Right cardiac atrium (tissue), 5 donors: ENCODE measurements at regions of chr19 and their contacts with region 1.

Region 1: DNA sequence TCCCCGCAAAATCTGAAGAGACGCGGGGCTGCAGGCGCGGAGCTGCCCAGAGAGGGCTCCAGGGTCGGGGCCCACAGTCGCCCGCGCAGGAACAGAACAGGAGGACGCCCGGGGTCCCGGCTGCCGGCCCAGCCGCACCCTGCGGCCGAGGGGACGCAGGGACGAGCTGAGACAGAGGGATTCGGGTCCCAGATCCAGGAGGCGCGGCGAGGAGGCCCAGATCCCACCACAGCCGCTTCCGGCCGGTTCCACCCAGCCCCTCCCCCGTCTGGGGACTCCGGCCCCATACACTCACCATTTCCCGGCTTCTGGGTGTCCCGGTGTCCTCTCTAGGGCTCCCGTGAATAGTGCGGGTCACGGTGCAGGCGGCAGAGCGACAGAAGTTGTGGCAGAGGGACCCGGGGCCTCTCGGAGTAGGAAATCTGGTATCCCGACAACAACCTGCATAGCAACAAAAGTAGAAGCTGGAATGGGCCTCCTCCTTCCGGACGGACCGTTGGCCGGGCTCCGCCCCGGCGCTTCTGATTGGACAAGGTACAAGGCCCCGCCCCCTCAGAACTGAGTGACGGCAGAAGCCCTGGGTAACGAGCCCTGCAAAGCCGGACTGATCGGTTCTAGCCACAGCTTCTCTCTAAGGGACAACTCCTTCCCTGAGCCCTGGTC is at the start of gene ZNF20:
- DNase-seq: peak; percentile 95 to 98 (median 98)
- ATAC-seq: peak; percentile 99 to 100
- H3K4me3 ChIP-seq: peak within 1 kb of the TSS; percentile 98
- H3K27ac ChIP-seq: peak within 1 kb of the TSS; percentile 88
- H3K4me1 ChIP-seq: peaks cover 4% of the 10 kb centered on the region
- H3K27me3 ChIP-seq: no peaks in the 10 kb centered on the region
- total RNA-seq, gene ZNF20: 0.42 to 2.5 (median 2.1) TPM

Region 2: GRCh38 chr19:11798391-11799330 is 341.4 kb before region 1 on chr19 and contains the start of gene ZNF491:
- intact Hi-C with region 1: loop called in 1 of 4 experiments (anchors 5 kb)
- DNase-seq: peak; percentile 94 to 98 (median 97)
- ATAC-seq: peak; percentile 100
- H3K4me3 ChIP-seq: peak within 1 kb of the TSS; percentile 65
- H3K27ac ChIP-seq: peak within 1 kb of the TSS; percentile 86
- H3K4me1 ChIP-seq: peaks cover 4% of the 10 kb centered on the region
- H3K27me3 ChIP-seq: no peaks in the 10 kb centered on the region
- total RNA-seq, gene ZNF491: 3.1 to 3.8 (median 3.4) TPM

Region 3: GRCh38 chr19:11881151-11881800 is 258.7 kb before region 1 on chr19:
- intact Hi-C with region 1: loop called in 2 of 4 experiments (anchors 2 to 5 kb)
- DNase-seq: peak in 2 of 3 donors; percentile 28 to 58
- ATAC-seq: peak; percentile 68 to 79
- H3K4me3 ChIP-seq: no peak overlapping the region
- H3K27ac ChIP-seq: no peak overlapping the region
- H3K4me1 ChIP-seq: no peaks in the 10 kb centered on the region
- H3K27me3 ChIP-seq: no peaks in the 10 kb centered on the region

Region 4: DNA sequence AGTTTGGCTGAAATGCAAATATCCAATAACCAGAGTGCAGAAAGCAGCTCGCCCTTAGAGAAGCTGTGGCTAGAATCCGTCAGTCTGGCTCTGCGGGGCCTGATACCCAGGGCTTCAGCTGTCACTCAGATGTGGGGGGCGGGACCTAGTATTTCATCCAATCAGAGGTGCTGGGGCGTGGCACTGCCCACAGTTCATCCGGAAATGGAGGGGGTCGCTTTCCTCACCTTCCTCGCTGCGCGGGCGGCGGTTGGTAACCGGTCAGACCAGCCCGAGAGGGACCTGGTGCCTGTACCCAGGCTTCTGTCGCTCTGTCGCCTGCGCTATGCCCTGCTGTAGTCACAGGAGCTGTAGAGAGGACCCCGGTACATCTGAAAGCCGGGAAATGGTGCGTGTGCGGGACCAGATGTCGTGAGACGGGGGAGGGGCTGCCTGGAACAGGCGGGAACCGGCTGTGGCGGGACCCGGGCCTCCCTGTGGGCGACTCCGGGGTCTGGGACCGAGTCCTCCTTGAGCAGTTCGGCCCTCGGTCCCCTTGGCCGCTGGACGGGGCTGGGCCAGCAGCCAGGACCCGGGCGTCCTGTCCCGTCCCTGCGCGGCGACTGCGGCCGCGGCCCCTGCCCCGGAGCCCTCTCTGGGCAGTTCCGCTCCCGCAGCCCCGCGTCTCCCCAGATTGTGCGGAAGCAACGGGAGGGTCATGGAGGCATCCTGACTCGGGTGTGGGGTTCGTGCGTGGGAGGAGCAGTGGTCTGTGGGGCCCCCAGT is 214.9 kb before region 1 on chr19 and contains the start of gene ZNF700:
- intact Hi-C with region 1: loop called in 1 of 4 experiments (anchors 10 kb)
- DNase-seq: peak; percentile 94 to 98 (median 96)
- ATAC-seq: peak; percentile 99
- H3K4me3 ChIP-seq: peak within 1 kb of the TSS; percentile 99
- H3K27ac ChIP-seq: peak within 1 kb of the TSS; percentile 98
- H3K4me1 ChIP-seq: no peaks in the 10 kb centered on the region
- H3K27me3 ChIP-seq: no peaks in the 10 kb centered on the region
- total RNA-seq, gene ZNF700: 4.6 to 6.2 (median 5.1) TPM

Region 5: DNA sequence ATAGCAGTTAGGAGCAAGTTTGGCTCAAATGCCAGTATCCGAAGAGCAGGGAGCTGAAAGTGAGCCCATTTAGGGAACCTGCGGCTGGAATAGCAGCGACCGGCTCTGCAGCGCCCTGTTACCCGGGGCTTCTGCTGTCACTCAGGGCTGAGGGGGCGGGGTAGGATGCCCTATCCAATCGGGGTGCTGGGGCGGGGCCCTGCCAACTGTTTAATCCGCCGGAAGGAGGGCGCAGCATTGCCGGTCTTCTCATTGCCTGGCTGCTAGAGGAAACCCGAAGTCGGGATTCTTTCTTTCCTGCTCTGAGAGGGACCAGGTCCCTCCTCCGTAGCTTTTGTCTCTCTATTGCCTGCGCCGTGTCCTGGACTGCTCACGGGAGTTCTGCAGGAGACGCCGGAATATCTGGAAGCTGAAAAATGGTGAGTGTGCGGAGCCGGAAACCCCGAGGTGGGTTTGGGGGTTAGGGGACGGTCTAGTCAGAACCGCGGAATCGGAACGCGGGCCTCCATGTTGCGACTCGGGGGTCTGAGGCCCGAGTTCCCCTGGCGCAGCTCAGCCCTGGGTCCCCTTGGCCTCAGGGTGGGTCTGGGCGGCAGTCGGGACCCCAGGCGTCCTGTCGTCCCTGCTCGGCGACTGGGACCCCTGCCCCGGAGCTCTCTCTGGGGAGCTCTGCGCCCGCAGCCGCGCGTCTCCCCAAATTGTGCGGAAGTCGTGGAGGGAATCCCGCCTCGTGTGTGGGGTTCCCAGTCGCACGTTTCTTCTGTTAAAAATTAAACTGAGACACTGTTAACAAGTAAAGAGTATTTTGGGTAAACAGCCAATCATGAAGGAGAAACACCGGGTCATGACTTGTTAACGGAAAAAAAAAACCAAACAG is 152.4 kb before region 1 on chr19:
- intact Hi-C with region 1: loop called in 1 of 4 experiments (anchors 10 kb)
- DNase-seq: peak; percentile 98 to 99 (median 98)
- ATAC-seq: peak; percentile 100
- H3K4me3 ChIP-seq: peak overlapping the region; percentile 79
- H3K27ac ChIP-seq: peak overlapping the region; percentile 68
- H3K4me1 ChIP-seq: no peaks in the 10 kb centered on the region
- H3K27me3 ChIP-seq: no peaks in the 10 kb centered on the region

Region 6: DNA sequence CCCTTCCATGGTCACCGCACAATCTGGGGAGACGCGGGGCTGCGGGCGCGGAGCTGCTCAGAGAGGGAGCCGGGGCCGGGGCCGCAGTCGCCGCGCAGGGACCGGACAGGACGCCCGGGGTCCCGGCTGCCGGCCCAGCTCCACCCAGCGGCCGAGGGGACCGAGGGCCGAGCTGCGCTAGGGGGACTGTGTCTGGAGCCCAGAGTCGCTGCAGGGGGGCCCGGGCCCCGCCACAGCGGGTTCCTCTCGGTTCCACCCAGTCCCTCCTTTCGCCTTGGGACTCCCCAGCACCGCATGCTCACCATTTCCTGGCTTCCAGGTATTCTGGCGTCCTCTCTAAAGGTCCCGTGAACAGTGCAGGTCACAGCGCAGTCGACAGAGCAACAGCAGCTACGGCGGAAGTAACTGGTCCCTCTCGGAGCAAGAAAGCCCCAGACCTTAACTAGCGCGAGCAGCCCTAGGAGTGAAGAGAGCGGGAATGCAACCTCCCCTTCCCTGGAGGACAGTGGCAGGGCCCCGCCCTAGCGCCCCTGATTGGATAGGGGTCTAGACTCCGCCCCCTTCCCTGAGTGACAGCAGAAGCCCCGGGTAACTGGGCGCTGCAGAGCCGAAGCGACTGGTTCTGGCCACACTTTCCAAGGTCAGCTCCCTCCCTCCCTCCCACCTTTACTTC is 87.4 kb before region 1 on chr19 and contains the start of gene ZNF878:
- intact Hi-C with region 1: loop called in 2 of 4 experiments (anchors 5 to 10 kb)
- DNase-seq: peak; percentile 92 to 96 (median 95)
- ATAC-seq: peak; percentile 100
- H3K4me3 ChIP-seq: peak within 1 kb of the TSS; percentile 79
- H3K27ac ChIP-seq: peak within 1 kb of the TSS; percentile 49
- H3K4me1 ChIP-seq: no peaks in the 10 kb centered on the region
- H3K27me3 ChIP-seq: no peaks in the 10 kb centered on the region
- total RNA-seq, gene ZNF878: 0.20 to 0.38 TPM in 2 of 4 donors, not detected in the others

Region 7: GRCh38 chr19:12092065-12092867 is 47.8 kb before region 1 on chr19:
- intact Hi-C with region 1: loop called in 1 of 4 experiments (anchors 5 kb)
- DNase-seq: peak; percentile 92 to 96 (median 95)
- ATAC-seq: peak; percentile 99
- H3K4me3 ChIP-seq: peak overlapping the region; percentile 67
- H3K27ac ChIP-seq: peak overlapping the region; percentile 38
- H3K4me1 ChIP-seq: no peaks in the 10 kb centered on the region
- H3K27me3 ChIP-seq: no peaks in the 10 kb centered on the region